WTC11 (cell line): ENCODE measurements at regions of chr10 and their contacts with region 1.

Region 1: DNA sequence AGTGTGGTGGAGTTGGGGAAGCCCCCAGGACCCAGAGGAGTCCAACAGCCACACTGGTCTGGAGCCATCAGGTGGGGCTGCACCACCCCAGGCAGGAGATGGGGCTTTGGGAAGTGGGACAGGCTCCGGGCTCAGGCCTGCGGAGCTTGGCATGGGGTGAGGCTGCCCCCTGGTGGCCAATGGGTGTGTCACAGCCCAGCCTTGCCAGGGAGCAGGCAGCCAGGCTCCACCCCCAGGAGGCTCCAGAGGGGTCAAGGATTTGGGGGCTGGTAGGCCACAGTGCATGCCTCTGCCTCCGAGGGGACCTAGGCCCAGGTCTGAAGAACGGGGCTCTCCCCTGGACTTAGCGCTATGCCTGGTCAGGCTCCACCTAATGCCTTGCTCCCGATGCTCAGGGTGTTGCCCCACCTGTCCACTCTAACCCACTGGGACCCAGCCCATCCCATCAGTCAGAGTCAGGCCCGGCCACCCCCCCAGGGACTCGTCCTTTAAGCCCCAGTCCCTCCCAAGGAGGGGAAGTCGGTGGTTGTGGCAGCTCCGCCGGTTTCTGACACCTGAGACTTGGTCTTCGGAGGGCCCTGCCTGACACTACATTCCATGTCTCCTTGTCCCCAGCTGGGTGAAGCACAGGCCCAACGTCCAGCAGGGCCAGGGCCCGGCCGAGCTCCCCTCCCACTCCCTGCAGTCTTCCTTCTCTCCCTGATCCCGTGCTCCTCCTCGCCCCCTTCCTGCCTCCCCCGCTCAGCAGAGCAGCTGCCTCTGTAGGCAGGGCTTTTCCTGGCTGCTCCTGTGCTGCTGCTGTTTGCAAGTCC is 11.3 kb upstream of the SAMD8 start:
- DNase-seq: peak; percentile 96
- ATAC-seq: peak; percentile 89
- H3K4me3 Mint-ChIP-seq: peak overlapping the region; percentile 43
- H3K27ac Mint-ChIP-seq: peak overlapping the region; percentile 83; the same call in 1 of the 2 replicates
- H3K4me1 Mint-ChIP-seq: peaks cover 24% of the 10 kb centered on the region
- H3K27me3 Mint-ChIP-seq: no peaks in the 10 kb centered on the region; the same call in 1 of the 2 replicates
- CTCF ChIP-seq: peak; percentile 96

Region 2: DNA sequence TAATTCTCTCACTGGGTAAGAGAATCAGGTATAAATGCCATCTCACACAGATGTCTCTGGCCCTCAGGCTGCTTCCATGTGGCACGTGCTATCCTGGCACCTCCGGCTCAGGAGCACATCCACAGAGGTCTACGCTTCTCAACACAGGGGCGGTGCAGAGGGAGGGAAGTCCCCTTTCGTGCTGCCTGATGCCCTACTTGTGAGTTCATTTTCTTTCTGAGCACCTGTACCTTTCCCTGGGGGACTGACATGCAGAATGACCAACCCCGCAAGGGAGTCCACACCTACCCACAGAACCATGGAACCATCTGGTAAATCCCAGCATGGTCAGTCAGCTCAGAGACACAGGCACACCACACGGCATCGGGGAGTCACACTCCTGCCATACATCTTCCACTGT is 87.7 kb before region 1 on chr10:
- CTCF ChIA-PET with region 1: no interaction called
- POLR2A ChIA-PET with region 1: no interaction called
- DNase-seq: no peak
- ATAC-seq: no peak
- H3K4me3 Mint-ChIP-seq: no peak overlapping the region
- H3K27ac Mint-ChIP-seq: peak overlapping the region; percentile 64
- H3K4me1 Mint-ChIP-seq: no peaks in the 10 kb centered on the region
- H3K27me3 Mint-ChIP-seq: no peaks in the 10 kb centered on the region
- CTCF ChIP-seq: no peak

Region 3: DNA sequence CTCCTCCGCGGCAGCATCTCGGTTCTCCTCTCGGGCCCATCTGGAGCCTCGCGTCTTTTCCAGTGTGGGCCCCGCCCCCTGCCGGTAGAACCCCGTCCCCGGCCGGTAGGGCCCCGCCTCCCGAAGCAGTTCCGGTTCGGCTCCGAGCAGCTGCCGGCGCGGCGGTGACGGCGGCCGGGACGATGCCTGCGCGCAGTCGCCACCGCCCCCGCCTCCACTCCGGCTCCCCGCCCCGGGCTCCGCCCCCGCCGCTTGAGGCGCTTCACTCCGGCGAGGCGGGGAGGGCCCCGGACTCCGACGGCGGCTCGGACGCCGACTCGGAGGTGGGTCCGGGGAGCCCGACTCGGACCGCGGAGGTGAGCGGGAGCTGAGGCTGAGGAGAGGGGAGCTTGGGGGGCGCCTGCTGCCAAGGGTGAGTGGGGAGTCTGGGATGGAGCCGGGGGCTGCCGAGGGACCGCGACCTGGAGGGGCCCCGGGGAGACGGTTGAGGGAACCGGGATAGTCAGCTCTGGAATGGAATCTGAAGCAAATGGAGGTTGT is 11.3 kb after region 1 on chr10 and contains the start of gene SAMD8:
- CTCF ChIA-PET with region 1: interaction called, 12 read pairs
- POLR2A ChIA-PET with region 1: no interaction called
- DNase-seq: peak; percentile 98
- ATAC-seq: no peak
- H3K4me3 Mint-ChIP-seq: peak within 1 kb of the TSS; percentile 97
- H3K27ac Mint-ChIP-seq: peak within 1 kb of the TSS; percentile 99
- H3K4me1 Mint-ChIP-seq: peaks cover 53% of the 10 kb centered on the region
- H3K27me3 Mint-ChIP-seq: no peaks in the 10 kb centered on the region
- CTCF ChIP-seq: peak; percentile 44; the same call in 1 of the 2 replicates
- total RNA-seq, gene SAMD8: 20.9 to 23.0 TPM (median 21.7 TPM) in 3 replicates

Region 4: DNA sequence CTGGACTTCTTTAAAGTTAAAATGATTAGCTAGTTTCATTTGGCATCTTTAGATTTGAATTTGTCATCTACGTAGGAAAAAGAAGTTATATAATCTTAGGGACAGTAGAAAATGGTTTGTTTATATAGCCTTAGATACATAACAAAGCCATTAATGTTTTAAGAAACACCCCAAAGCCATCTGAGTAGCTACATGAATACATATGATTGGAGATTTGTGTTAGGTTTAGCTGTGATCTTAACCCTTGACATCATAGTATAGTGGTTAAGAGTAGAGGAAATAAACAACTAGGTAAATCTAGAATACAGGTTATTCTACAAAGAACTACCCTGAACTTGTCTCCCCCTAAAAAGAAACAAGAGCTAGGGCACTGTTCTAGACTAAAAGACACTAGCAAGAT is 29.4 kb after region 1 on chr10:
- CTCF ChIA-PET with region 1: no interaction called
- POLR2A ChIA-PET with region 1: no interaction called
- DNase-seq: no peak
- ATAC-seq: no peak
- H3K4me3 Mint-ChIP-seq: no peak overlapping the region
- H3K27ac Mint-ChIP-seq: no peak overlapping the region
- H3K4me1 Mint-ChIP-seq: 0 out of 2 replicates have a peak, but pooled peaks cover 5% of the 10 kb centered on the region
- H3K27me3 Mint-ChIP-seq: no peaks in the 10 kb centered on the region
- CTCF ChIP-seq: no peak